ENCODE measurements at regions of chr1 and their contacts with region 1.

Region 1: DNA sequence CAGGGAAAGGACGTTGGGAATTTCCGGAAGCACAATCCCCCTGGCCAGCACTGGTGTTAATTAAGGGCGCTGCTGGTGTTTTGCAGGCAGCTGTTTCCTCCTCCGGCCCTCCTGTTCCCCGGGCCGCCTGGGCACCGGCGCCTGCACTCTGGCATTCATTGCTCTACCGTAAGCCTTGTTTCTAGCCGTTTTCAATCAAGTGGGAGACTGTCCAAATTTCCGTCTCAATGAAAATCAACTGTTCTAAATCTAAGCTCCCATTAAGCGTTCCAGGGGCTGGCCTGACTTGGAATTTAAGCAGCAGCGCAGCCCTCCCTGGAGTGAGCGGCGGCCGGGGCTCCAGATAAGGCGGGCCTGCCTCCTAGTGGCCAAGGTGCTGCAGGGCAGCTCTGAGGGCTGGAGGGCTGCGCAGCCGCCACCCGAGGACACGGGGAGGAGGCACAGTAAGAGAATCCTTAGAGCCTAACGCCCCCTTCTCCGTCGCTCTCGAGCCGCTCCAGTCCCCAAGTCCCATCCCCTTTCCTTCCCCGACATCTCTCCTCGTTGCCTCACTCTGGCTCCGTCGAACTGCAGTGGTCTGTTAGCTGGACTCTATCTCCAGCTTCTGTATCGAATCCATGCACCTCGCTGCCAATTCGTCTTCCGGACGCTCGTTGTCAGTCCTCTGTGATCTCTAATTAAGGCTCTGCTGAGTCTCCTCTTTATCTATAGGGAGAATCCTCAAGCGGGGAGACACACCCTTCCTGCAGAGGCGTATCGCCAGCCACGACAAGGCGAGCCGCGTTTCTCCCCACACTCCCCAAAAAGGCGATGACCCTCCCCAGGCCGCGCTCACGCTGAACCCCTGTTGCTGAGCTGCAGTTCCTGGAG is 57.8 kb upstream of the LRRC8D start:
- DNase-seq: peak; percentile 91
- H3K4me3 Mint-ChIP-seq: peak overlapping the region; percentile 71
- H3K27ac Mint-ChIP-seq: peak overlapping the region; percentile 80
- H3K4me1 Mint-ChIP-seq: peaks cover 54% of the 10 kb centered on the region
- H3K27me3 Mint-ChIP-seq: peaks cover 11% of the 10 kb centered on the region

Region 2: DNA sequence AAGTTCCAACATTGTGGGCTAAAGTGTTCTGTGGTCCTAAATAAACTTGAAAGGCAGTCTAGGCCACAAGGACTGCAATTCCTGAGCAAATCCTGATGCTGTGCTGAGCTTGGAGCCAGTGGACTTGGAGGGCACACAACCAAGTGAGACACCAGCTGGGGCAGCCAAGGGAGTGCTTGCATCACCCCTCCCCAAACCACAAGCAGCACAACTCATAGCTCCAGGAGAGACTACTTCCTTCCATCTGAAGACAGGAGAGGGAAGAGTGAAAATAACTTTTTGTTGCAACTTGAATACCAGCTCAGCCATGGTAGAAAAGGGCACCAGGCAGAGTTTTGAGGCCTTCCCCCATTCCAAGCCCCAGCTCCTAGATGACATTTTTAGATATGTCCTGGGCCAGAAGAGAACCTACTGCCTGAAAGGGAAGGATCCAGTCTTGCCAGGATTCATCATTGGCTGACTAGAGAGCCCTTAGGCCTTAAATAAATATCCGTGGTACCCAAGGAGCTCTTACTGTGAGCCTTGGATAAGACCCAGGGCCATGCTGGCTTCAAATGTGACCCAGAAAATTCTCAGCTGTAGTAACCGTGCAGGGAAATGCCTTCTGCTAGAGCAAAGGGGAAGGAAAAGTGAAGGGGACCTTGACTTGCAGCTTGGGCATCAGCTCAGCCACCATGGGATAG is 273.8 kb before region 1 on chr1:
- CTCF ChIA-PET with region 1: interaction called, 58 read pairs
- DNase-seq: no peak
- H3K4me3 Mint-ChIP-seq: no peak overlapping the region
- H3K27ac Mint-ChIP-seq: no peak overlapping the region
- H3K4me1 Mint-ChIP-seq: peaks cover 23% of the 10 kb centered on the region
- H3K27me3 Mint-ChIP-seq: peaks cover 20% of the 10 kb centered on the region

Region 3: DNA sequence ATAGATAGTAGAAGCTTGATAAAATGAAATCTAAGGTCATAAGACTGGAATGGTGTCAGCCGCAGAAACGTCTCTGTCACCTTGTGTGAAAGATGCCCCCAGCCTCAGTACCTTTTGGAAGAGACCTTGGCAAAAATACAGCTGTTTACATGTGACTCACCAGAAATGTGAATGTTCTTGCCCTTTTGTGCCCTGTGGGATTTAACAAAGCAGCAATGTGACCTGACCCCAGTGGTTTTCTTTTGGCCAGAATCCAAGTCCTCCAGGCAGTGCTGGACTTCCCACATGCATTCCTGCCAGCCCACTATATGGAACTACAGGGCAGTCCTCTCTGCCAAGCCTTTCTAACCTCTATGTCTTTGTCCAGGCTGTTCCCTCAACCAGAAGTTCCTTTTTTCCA is 157.3 kb before region 1 on chr1:
- CTCF ChIA-PET with region 1: interaction called, 34 read pairs
- DNase-seq: no peak
- H3K4me3 Mint-ChIP-seq: no peak overlapping the region
- H3K27ac Mint-ChIP-seq: peak overlapping the region; percentile 100
- H3K4me1 Mint-ChIP-seq: peaks cover 95% of the 10 kb centered on the region
- H3K27me3 Mint-ChIP-seq: peaks cover 9% of the 10 kb centered on the region

Region 4: DNA sequence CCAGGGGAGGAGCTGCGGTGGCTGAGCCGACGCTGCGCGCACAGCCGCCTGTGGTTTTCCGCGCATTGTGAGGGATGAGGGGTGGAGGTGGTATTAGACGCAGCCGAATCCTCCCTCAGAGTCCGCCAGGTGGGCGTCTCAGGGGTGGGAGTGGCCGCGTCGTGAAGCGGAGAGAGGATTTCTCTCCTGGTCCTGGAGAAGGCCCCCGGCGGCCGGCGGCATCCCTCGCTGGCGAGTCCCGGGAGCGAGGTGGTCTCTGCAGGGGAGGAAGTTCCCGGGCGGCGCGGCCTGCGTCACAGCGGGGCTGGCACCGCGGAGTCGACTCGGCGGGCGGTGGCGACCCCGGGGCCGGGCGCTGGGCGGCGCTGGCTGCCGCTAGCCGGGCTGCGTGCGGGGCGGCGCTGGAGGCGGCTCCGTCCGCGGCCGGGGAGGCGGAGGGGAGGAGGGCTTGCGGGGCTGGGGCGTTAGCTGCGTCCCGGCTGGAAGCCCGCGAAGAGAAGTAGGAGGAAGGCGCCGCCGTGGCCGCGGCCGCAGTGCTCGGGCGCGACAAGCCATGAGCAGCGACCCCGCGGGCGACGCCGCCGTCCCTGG is 130.3 kb before region 1 on chr1 and contains the start of gene LRRC8C:
- CTCF ChIA-PET with region 1: interaction called, 203 read pairs
- DNase-seq: peak; percentile 89
- H3K4me3 Mint-ChIP-seq: peak within 1 kb of the TSS; percentile 91
- H3K27ac Mint-ChIP-seq: peak within 1 kb of the TSS; percentile 96
- H3K4me1 Mint-ChIP-seq: peaks cover 78% of the 10 kb centered on the region
- H3K27me3 Mint-ChIP-seq: peaks cover 4% of the 10 kb centered on the region

Region 5: DNA sequence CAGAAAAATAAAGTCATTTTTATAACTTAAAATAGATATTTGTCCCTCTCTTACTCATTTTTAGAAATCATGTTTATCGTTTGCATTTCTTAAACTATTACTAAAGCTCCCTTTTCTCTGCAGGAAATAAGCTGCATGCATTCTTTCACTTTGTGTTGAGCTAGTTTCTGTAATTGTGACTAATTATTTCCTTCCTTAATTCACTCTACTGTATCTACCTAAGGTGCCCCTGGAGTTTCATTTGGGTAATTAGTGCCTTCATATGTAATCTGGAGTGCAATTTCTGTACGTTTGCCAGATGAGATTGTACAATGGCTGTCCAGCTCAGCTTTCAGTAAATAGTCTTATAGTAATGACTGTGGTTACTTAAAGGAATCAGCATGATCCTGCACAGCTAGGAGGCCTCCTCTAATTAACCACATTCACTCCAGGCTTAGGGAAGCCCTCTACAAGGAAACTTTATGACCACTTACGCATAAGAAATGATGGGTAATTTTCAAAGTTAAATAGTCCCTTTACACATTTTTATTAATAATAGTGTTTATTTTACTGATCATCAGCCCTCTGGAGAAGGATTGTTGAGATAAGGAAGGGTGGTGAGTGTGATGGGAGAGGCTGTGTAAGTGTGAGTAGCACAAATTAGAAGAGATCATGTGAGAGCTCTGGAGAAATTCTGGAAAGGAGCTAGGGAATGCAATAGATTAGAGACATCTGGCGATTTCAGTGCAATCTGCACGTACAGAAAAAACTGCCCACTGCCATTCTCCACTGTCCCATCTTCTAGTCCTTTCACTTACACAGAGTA is 43.3 kb before region 1 on chr1:
- CTCF ChIA-PET with region 1: interaction called, 42 read pairs
- DNase-seq: no peak
- H3K4me3 Mint-ChIP-seq: peak overlapping the region; percentile 32
- H3K27ac Mint-ChIP-seq: peak overlapping the region; percentile 91
- H3K4me1 Mint-ChIP-seq: peaks cover 75% of the 10 kb centered on the region
- H3K27me3 Mint-ChIP-seq: no peaks in the 10 kb centered on the region

Measured in activated naive CD4-positive, alpha-beta T cell treated with anti-CD3 and anti-CD28 coated beads, Interleukin-2, amount 10 ng/mL, durations not matched to agents 7 days and 5 days (primary cell).